HepG2 (cell line): ENCODE measurements at regions of chr7 and their contacts with region 1.

Region 1: GRCh38 chr7:25093268-25093826 is 31.7 kb downstream of the CYCS start:
- DNase-seq: peak; percentile 70
- ATAC-seq: peak; percentile 91
- H3K4me3 ChIP-seq: no peak overlapping the region
- H3K27ac ChIP-seq: no peak overlapping the region
- H3K4me1 ChIP-seq: peaks cover 56% of the 10 kb centered on the region
- H3K27me3 ChIP-seq: no peaks in the 10 kb centered on the region
- CTCF ChIP-seq: peak; percentile 83
- EP300 ChIP-seq: no peak
- POLR2A ChIP-seq: no peak
- RAD21 ChIP-seq: peak; percentile 65

Region 2: DNA sequence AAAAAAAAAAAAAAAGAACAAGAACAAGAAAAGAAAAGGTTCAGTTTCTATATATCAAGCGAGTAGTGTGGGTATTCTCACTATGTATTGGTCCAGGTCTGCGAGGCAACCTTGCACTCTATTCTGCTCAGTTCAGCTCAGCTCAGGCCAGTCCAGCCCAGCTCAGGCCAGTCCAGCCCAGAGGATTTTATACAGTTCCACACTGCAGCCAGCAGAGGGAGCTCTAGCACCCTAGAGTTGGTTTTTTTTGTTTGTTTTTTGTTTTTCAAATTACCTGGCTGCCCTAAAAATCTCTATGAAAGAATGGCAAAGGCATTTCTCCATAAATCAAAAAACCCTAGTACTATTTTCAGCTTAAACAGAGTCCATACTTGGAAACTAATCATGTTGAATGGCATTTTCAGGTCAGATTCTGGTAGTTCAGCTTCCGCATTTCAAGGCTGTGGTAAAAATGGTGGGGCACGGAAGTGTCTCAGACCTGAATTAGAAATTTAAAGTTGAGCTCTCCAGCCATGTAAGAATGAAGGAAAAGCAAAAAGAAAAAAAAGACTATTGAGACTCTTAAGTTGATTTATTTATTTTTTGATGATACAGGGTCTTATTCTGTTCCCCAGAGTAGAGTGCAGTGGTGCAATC is 280.9 kb before region 1 on chr7:
- CTCF ChIA-PET with region 1: interaction called, 24 read pairs
- POLR2A ChIA-PET with region 1: no interaction called
- in situ Hi-C with region 1: loop called (anchors 5 kb)
- intact Hi-C with region 1: loop called (anchors 1 kb)
- DNase-seq: peak; percentile 46
- ATAC-seq: peak; percentile 96
- H3K4me3 ChIP-seq: no peak overlapping the region
- H3K27ac ChIP-seq: no peak overlapping the region
- H3K4me1 ChIP-seq: no peaks in the 10 kb centered on the region
- H3K27me3 ChIP-seq: no peaks in the 10 kb centered on the region
- CTCF ChIP-seq: peak; percentile 80
- EP300 ChIP-seq: no peak
- POLR2A ChIP-seq: no peak
- RAD21 ChIP-seq: peak; percentile 68

Region 3: DNA sequence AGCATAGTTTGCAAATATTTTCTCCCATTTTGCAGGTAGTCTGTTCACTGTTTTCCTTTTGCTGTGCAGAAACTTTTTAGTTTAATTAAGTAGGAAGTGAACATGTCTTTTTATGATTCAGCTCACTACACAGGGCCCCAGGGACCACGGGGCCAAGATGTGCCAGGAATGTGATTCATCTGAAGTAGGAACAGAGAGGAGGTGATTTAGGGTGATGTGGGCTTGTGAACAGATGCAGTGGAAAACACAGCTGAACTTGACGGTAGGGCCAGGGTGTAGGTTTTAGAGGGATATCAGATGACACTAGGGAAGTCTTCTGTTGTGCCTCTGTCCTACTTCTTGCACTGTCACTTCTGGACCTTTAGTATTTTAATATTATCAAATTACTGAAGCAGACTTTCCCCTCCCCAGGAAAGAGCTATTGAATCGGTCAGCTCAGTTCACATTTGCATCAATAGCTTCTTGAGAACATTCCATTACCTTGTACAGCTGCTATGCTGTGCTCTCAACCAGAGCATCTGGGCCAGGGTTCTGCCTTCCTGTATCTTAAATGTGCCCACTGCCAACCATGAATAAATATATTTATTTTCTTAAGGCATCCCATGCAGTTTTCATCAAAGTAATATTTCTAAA is 210.2 kb before region 1 on chr7:
- CTCF ChIA-PET with region 1: no interaction called
- POLR2A ChIA-PET with region 1: no interaction called
- in situ Hi-C with region 1: no loop called
- intact Hi-C with region 1: loop called (anchors 5 kb)
- DNase-seq: no peak
- ATAC-seq: no peak
- H3K4me3 ChIP-seq: no peak overlapping the region
- H3K27ac ChIP-seq: no peak overlapping the region
- H3K4me1 ChIP-seq: no peaks in the 10 kb centered on the region
- H3K27me3 ChIP-seq: no peaks in the 10 kb centered on the region
- CTCF ChIP-seq: no peak
- EP300 ChIP-seq: no peak
- POLR2A ChIP-seq: no peak
- RAD21 ChIP-seq: no peak

Region 4: GRCh38 chr7:24896031-24896501 is 197.3 kb before region 1 on chr7:
- CTCF ChIA-PET with region 1: interaction called, 3 read pairs
- POLR2A ChIA-PET with region 1: no interaction called
- in situ Hi-C with region 1: loop called (anchors 10 kb)
- intact Hi-C with region 1: loop called (anchors 2 kb)
- DNase-seq: no peak
- ATAC-seq: no peak
- H3K4me3 ChIP-seq: no peak overlapping the region
- H3K27ac ChIP-seq: no peak overlapping the region
- H3K4me1 ChIP-seq: peaks cover 8% of the 10 kb centered on the region
- H3K27me3 ChIP-seq: no peaks in the 10 kb centered on the region
- CTCF ChIP-seq: no peak
- EP300 ChIP-seq: no peak
- POLR2A ChIP-seq: no peak
- RAD21 ChIP-seq: no peak

Region 5: DNA sequence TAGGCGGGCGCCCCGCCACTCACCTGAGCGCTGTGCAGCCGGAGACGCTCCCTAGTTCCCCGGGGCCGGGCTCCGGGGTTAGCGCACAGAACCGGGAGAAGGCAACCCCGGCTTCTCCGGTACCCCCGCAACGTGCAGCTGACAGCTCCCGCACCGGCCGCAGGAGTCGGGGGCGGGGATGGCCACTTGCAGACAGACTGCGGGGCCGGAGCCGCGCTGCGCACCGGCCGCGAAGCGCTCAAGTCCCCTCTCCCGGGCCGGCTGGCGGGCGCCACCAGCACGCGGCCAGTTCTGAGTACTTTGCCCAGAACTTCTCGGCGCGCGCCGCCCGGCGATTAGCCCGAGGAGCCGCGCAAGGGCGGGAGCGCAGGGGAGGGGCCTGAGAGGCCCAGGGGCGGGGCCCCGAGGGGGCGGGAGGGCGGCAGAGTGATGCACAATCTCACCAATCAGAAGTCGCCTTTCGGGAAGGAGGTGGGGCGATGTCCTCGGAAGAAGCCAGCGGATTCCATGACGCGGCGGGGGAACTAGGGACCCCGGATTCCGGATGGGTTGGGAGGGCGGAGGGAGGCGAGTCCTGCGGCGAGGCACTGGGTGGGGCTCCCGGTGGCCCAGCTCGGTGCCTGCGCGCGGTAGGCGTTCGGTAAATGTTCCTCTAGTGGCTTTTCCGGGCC is 113.3 kb before region 1 on chr7 and contains the start of gene OSBPL3:
- CTCF ChIA-PET with region 1: no interaction called
- POLR2A ChIA-PET with region 1: interaction called, 3 read pairs
- in situ Hi-C with region 1: no loop called
- intact Hi-C with region 1: loop called (anchors 2 kb)
- DNase-seq: peak; percentile 91
- ATAC-seq: peak; percentile 84
- H3K4me3 ChIP-seq: peak within 1 kb of the TSS; percentile 78 to 89 (median 87)
- H3K27ac ChIP-seq: peak within 1 kb of the TSS; percentile 94
- H3K4me1 ChIP-seq: peaks cover 82% of the 10 kb centered on the region
- H3K27me3 ChIP-seq: no peaks in the 10 kb centered on the region; a peak in 1 of 5 replicates
- CTCF ChIP-seq: peak; percentile 46
- EP300 ChIP-seq: no peak
- POLR2A ChIP-seq: peak; percentile 72 to 81
- RAD21 ChIP-seq: no peak; the same call in 1 of the 2 replicates
- total RNA-seq, gene OSBPL3: 26.4 and 28.9 TPM in 2 replicates

Region 6: DNA sequence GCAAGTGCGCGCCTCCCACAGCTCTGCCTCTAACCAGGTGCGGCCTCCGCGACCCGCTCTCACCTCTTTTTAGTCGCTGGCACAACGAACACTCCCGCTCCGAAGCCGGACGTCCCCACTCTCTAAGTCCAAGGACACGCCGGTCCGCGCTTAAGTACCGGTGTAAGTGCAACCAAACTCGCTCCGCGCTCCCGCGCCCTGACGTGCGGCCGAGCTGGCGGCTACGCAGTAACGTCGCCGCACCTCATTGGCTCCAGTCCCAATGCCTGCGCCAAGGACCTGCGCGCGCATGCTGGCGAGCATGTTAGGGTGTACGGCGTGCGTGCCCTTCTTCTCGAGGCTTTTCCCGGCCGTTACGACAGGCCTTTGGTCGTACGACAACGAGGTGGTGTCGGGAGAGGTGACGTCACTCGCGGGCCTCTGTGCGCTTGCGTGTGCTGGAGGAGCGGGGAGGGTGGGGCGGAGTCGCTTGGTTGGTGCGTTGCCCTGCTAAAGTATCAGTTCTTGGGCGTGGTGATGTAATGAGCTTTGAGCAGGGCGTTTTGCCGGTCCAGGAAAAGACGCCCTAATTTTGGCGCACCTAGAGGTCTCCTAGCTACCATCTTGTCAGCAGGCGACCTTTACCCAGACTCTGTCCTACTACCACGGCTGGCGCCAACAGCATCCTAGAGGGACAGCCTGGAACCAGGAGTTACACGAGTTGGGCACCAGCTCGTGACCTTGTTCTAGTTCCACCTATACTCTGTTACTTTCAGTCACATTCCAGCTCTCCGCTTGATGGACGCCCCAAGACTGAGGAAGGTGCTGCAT is 32.0 kb after region 1 on chr7 and contains the start of gene CYCS:
- CTCF ChIA-PET with region 1: no interaction called
- POLR2A ChIA-PET with region 1: interaction called, 13 read pairs
- in situ Hi-C with region 1: no loop called
- intact Hi-C with region 1: no loop called
- DNase-seq: peak; percentile 98
- ATAC-seq: peak; percentile 96
- H3K4me3 ChIP-seq: peak within 1 kb of the TSS; percentile 83 to 87 (median 85)
- H3K27ac ChIP-seq: peak within 1 kb of the TSS; percentile 81
- H3K4me1 ChIP-seq: peaks cover 15% of the 10 kb centered on the region
- H3K27me3 ChIP-seq: no peaks in the 10 kb centered on the region; a peak in 2 of 5 replicates
- CTCF ChIP-seq: no peak
- EP300 ChIP-seq: peak; percentile 25 to 56; a peak in 2 of 4 replicates
- POLR2A ChIP-seq: peak; percentile 99
- RAD21 ChIP-seq: peak; percentile 27
- total RNA-seq, gene CYCS: 202 and 328 TPM in 2 replicates